IMR-90 (cell line): ENCODE measurements at regions of chr7 and their contacts with region 1.

Region 1: DNA sequence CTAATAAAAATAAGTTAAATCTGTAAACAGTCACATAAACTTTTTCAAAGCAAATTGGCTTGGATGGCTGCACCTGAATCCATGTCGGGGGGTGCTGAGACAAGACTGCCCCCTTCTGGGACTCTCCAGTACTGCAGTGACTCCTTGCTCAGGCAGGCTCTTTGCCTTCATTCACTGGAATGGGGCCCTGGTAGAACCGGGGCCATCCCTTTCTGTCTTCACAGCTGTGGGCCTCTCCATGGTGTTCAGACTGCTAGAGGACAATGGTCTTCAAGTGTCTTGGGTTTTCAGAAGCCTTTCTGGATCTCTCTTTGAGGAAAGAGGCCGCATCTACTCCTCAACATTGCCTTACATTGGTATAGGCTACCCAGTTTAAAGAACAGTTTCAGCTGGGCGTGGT is 16.1 kb upstream of the IMPDH1 start:
- DNase-seq: peak; percentile 52
- ATAC-seq: peak; percentile 82
- H3K4me3 ChIP-seq: no peak overlapping the region
- H3K27ac ChIP-seq: no peak overlapping the region
- H3K4me1 ChIP-seq: peaks cover 2% of the 10 kb centered on the region; the same call in 1 of the 2 replicates
- H3K27me3 ChIP-seq: peaks cover 5% of the 10 kb centered on the region
- CTCF ChIP-seq: peak; percentile 89
- POLR2A ChIP-seq: no peak
- RAD21 ChIP-seq: peak; percentile 84

Region 2: GRCh38 chr7:128343554-128344430 is 82.1 kb before region 1 on chr7 and contains the start of gene RBM28:
- CTCF ChIA-PET with region 1: interaction called, 12 read pairs
- POLR2A ChIA-PET with region 1: no interaction called
- dilution Hi-C with region 1: no loop called
- in situ Hi-C with region 1: no loop called
- intact Hi-C with region 1: loop called (anchors 1 kb)
- DNase-seq: peak; percentile 90
- ATAC-seq: peak; percentile 97
- H3K4me3 ChIP-seq: peak within 1 kb of the TSS; percentile 78
- H3K27ac ChIP-seq: peak within 1 kb of the TSS; percentile 91
- H3K4me1 ChIP-seq: peaks cover 2% of the 10 kb centered on the region; the same call in 1 of the 2 replicates
- H3K27me3 ChIP-seq: peaks cover 9% of the 10 kb centered on the region
- CTCF ChIP-seq: no peak
- POLR2A ChIP-seq: peak; percentile 75
- RAD21 ChIP-seq: no peak
- total RNA-seq, gene RBM28: 12.4 and 18.6 TPM in 2 replicates

Region 3: DNA sequence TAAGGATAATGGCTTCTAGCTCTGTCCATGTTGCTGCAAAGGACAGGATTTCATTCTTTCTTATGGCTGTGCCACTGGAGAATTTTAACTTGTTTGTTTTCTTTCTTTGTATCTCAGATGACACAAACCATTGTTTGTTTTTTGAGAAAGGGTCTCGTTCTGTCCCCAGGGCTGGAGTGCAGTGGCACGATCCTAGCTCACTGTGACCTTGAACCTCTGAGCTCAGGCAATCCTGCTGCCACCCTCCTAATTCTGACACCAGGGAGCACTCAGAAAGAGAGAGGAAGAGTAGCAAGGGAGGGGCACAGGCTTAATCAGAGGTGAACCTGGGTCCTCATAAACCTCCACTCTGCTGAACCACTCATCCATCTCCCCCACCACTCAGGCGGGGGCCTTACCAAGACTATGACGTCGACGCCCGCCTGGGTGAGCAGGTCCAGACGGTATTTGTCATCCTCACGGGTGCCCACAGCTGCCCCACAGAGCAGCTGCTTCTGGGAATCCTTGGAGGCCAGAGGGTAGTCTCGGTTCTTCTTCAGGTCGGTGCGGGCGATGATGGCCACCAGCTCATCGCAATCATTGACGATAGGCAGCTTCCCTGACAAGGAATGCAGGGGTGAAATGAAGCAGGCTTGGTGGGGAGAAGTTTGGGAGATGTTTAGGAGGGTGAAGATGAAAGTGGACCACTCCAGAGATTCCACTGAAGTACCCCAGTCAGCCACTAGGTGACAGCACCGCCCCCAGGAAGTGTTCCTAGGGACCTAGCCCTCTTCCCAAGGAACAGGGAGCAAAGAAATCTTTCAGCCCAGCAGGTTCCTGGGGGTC is 27.6 kb before region 1 on chr7:
- CTCF ChIA-PET with region 1: interaction called, 5 read pairs
- POLR2A ChIA-PET with region 1: no interaction called
- dilution Hi-C with region 1: no loop called
- in situ Hi-C with region 1: no loop called
- intact Hi-C with region 1: loop called (anchors 1 kb)
- DNase-seq: peak; percentile 41
- ATAC-seq: peak; percentile 98
- H3K4me3 ChIP-seq: no peak overlapping the region
- H3K27ac ChIP-seq: no peak overlapping the region
- H3K4me1 ChIP-seq: no peaks in the 10 kb centered on the region
- H3K27me3 ChIP-seq: no peaks in the 10 kb centered on the region
- CTCF ChIP-seq: peak; percentile 88
- POLR2A ChIP-seq: no peak
- RAD21 ChIP-seq: peak; percentile 82

Region 4: GRCh38 chr7:128455551-128456254 is 29.9 kb after region 1 on chr7 and contains the start of gene HILPDA:
- CTCF ChIA-PET with region 1: interaction called, 71 read pairs
- POLR2A ChIA-PET with region 1: interaction called, 4 read pairs
- dilution Hi-C with region 1: no loop called
- in situ Hi-C with region 1: loop called (anchors 5 kb)
- intact Hi-C with region 1: loop called (anchors 1 kb)
- DNase-seq: peak; percentile 95
- ATAC-seq: peak; percentile 92
- H3K4me3 ChIP-seq: peak within 1 kb of the TSS; percentile 82
- H3K27ac ChIP-seq: peak within 1 kb of the TSS; percentile 89
- H3K4me1 ChIP-seq: peaks cover 17% of the 10 kb centered on the region
- H3K27me3 ChIP-seq: no peaks in the 10 kb centered on the region; the same call in 1 of the 2 replicates
- CTCF ChIP-seq: no peak
- POLR2A ChIP-seq: peak; percentile 82
- RAD21 ChIP-seq: no peak
- total RNA-seq, gene HILPDA: 23.6 and 31.2 TPM in 2 replicates

Region 5: GRCh38 chr7:128462460-128462859 is 36.6 kb after region 1 on chr7:
- CTCF ChIA-PET with region 1: interaction called, 71 read pairs
- POLR2A ChIA-PET with region 1: no interaction called
- dilution Hi-C with region 1: no loop called
- in situ Hi-C with region 1: loop called (anchors 5 kb)
- intact Hi-C with region 1: loop called (anchors 1 kb)
- DNase-seq: no peak
- ATAC-seq: no peak
- H3K4me3 ChIP-seq: no peak overlapping the region
- H3K27ac ChIP-seq: no peak overlapping the region
- H3K4me1 ChIP-seq: no peaks in the 10 kb centered on the region
- H3K27me3 ChIP-seq: no peaks in the 10 kb centered on the region
- CTCF ChIP-seq: no peak
- POLR2A ChIP-seq: no peak
- RAD21 ChIP-seq: no peak

Region 6: GRCh38 chr7:128883622-128884501 is 458.0 kb after region 1 on chr7:
- CTCF ChIA-PET with region 1: no interaction called
- POLR2A ChIA-PET with region 1: no interaction called
- dilution Hi-C with region 1: no loop called
- in situ Hi-C with region 1: no loop called
- intact Hi-C with region 1: loop called (anchors 5 kb)
- DNase-seq: peak; percentile 54
- ATAC-seq: peak; percentile 79
- H3K4me3 ChIP-seq: no peak overlapping the region
- H3K27ac ChIP-seq: no peak overlapping the region
- H3K4me1 ChIP-seq: no peaks in the 10 kb centered on the region
- H3K27me3 ChIP-seq: peaks cover 7% of the 10 kb centered on the region; the same call in 1 of the 2 replicates
- CTCF ChIP-seq: peak; percentile 87
- POLR2A ChIP-seq: no peak
- RAD21 ChIP-seq: peak; percentile 73